Thyroid gland (tissue), 4 donors: ENCODE measurements at regions of chr5 and their contacts with region 1.

Region 1: GRCh38 chr5:119411935-119412602 is 40.2 kb upstream of the HSD17B4 start:
- DNase-seq: peak; percentile 66 to 69
- H3K4me3 ChIP-seq: peak overlapping the region in 2 of 3 donors; percentile 25 to 35
- H3K27ac ChIP-seq: peak overlapping the region; percentile 80 to 84 (median 80)
- H3K4me1 ChIP-seq: peaks cover 0 to 6% of the 10 kb centered on the region in 2 donors
- H3K27me3 ChIP-seq: no peaks in the 10 kb centered on the region
- CTCF ChIP-seq: peak; percentile 77 to 98 (median 93)
- POLR2A ChIP-seq: no peak

Region 2: GRCh38 chr5:118987988-118988865 is 423.8 kb before region 1 on chr5 and contains the start of gene DTWD2:
- intact Hi-C with region 1: loop called (anchors 5 kb)
- DNase-seq: peak; percentile 95 to 97
- H3K4me3 ChIP-seq: peak within 1 kb of the TSS; percentile 39 to 95 (median 46)
- H3K27ac ChIP-seq: peak within 1 kb of the TSS; percentile 92 to 98 (median 94)
- H3K4me1 ChIP-seq: peaks cover 5 to 14% of the 10 kb centered on the region in 2 donors
- H3K27me3 ChIP-seq: no peaks in the 10 kb centered on the region
- CTCF ChIP-seq: peak; percentile 72 to 96 (median 80)
- POLR2A ChIP-seq: peak in 1 of 2 donors; percentile 66
- total RNA-seq, gene DTWD2: 17.6 to 37.8 (median 28.8) TPM

Region 3: DNA sequence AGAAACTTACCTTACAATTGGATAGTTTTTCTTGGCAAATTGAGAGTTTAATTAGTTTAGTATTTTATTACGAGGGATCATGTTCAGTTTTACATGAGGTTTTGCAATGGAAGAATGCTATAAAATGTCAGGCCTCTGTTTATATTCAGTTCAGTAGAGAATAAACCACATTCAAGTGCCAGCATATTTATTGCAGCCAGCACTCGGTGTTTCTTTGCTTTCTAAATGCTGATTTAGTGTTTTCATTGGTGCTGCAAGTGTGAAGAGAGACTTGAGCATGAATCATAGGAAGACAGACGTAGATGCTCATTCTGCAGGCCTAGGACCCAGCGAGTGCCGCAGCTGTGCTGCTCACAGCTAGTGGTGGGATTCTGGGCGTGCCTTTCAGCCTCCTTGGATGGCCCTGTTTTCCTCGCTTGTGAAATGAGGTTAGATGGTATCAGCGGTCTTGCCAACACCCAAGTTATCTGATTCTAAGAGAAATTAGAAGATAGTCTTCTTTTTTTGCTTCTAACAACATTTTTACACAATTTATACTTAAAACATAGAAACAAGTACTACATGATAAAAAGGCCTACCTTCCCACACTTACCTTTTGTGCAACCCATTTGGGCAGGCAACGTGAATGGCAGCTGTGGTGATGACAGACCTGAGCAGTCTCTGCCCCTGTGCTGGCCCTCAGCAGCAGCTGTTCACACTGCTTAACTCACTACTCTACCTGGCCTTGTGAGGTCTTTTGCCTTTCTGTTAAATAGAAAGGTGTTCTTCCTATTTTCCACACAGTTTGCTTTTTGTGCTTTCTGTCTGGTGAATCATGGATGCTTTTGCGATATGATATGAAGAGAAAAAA is 83.1 kb before region 1 on chr5:
- intact Hi-C with region 1: loop called (anchors 10 kb)
- DNase-seq: no peak
- H3K4me3 ChIP-seq: no peak overlapping the region
- H3K27ac ChIP-seq: peak overlapping the region in 1 of 3 donors; percentile 59
- H3K4me1 ChIP-seq: peaks cover 11 to 20% of the 10 kb centered on the region in 2 donors
- H3K27me3 ChIP-seq: no peaks in the 10 kb centered on the region
- CTCF ChIP-seq: no peak
- POLR2A ChIP-seq: no peak

Region 4: DNA sequence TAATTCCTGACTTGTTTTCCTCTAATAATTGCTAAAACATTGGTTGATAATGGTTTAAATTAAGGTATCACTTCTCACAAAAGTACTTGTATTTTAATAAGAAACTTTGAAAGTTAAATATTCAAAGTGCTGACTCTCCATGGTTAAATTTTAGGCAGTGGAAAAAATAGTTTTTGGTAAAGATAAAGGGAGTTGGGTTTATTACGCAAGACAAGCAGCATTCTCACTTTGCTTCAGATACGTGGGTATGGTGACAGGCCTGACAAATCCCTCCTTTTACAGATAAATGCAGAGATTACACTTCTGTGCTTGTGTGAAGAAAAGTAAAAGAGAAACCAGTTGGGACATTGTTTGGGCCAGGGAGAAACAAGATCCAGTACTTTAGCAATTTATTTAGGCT is 202.8 kb after region 1 on chr5:
- intact Hi-C with region 1: no loop called
- DNase-seq: no peak
- H3K4me3 ChIP-seq: no peak overlapping the region
- H3K27ac ChIP-seq: no peak overlapping the region
- H3K4me1 ChIP-seq: no peaks in the 10 kb centered on the region
- H3K27me3 ChIP-seq: no peaks in the 10 kb centered on the region
- CTCF ChIP-seq: no peak
- POLR2A ChIP-seq: no peak